Transverse colon (tissue), 4 donors: ENCODE measurements at regions of chr20 and their contacts with region 1.

Region 1: DNA sequence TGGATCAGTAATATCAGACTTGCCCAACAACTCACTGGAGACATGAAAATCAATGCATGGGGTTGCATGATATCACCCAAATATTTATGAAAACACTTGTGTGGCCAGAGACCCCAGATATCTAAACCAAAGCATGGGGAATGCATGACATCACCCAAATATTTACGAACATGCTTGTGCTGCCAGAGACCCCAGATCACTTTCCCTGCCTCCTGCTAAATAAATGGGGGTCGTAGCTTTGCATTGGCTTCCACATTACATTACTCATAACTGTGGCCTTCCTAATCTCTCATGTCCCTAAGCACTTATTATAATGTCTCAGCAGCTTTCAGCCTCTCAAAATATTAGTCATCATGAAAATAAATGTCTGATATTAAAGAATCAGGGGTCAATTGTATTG is 838.0 kb upstream of the DEFB115 start:
- DNase-seq: no peak
- H3K4me3 ChIP-seq: no peak overlapping the region
- H3K27ac ChIP-seq: no peak overlapping the region
- H3K4me1 ChIP-seq: no peaks in the 10 kb centered on the region
- H3K27me3 ChIP-seq: no peaks in the 10 kb centered on the region
- CTCF ChIP-seq: no peak
- EP300 ChIP-seq: no peak
- POLR2A ChIP-seq: no peak

Region 2: DNA sequence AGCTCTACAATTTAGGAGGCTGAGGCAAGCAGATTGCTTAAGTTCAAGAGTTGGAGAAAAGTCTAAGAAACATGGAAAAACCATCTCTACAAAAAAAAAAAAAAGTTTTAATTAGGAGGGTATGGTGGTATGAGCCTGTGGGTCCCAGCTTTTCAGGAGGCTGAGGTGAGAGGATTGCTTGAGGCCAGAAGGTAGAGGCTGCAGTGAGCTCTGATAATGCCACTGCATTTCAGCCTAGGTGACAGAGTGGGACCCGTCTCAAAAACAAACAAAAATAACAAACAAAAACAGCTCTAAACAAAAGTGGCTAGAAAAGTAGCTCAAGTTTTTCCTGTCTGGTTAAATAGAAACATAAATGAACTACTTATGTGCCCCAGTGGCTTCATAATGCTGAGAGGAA is 1295.6 kb before region 1 on chr20:
- in situ Hi-C with region 1: loop called in 1 of 4 experiments (anchors 25 kb)
- intact Hi-C with region 1: no loop called
- DNase-seq: no peak
- H3K4me3 ChIP-seq: no peak overlapping the region
- H3K27ac ChIP-seq: no peak overlapping the region
- H3K4me1 ChIP-seq: no peaks in the 10 kb centered on the region
- H3K27me3 ChIP-seq: no peaks in the 10 kb centered on the region
- CTCF ChIP-seq: no peak
- EP300 ChIP-seq: no peak
- POLR2A ChIP-seq: no peak